Mammary epithelial cell (primary cell): ENCODE measurements at regions of chr3 and their contacts with region 1.

Region 1: GRCh38 chr3:169759256-169759655 is 5.6 kb downstream of the TERC start:
- DNase-seq: peak; percentile 86
- H3K4me3 ChIP-seq: no peak overlapping the region
- H3K27ac ChIP-seq: peak overlapping the region; percentile 35
- H3K4me1 ChIP-seq: peaks cover 34% of the 10 kb centered on the region
- H3K27me3 ChIP-seq: no peaks in the 10 kb centered on the region
- CTCF ChIP-seq: no peak

Region 2: GRCh38 chr3:169041677-169042171 is 717.5 kb before region 1 on chr3:
- CTCF ChIA-PET with region 1: no interaction called
- dilution Hi-C with region 1: no loop called
- in situ Hi-C with region 1: no loop called
- intact Hi-C with region 1: loop called (anchors 10 kb)
- DNase-seq: peak; percentile 43
- H3K4me3 ChIP-seq: no peak overlapping the region
- H3K27ac ChIP-seq: peak overlapping the region; percentile 37
- H3K4me1 ChIP-seq: peaks cover 33% of the 10 kb centered on the region
- H3K27me3 ChIP-seq: no peaks in the 10 kb centered on the region
- CTCF ChIP-seq: peak; percentile 63 to 68